Mammary epithelial cell (primary cell): ENCODE measurements at regions of chr17 and their contacts with region 1.

Region 1: GRCh38 chr17:77280980-77281903 is 140.5 kb downstream of the SEC14L1 start:
- DNase-seq: peak; percentile 66
- H3K4me3 ChIP-seq: peak overlapping the region; percentile 84 to 95 (median 87)
- H3K27ac ChIP-seq: peak overlapping the region; percentile 96
- H3K4me1 ChIP-seq: peaks cover 42% of the 10 kb centered on the region
- H3K27me3 ChIP-seq: no peaks in the 10 kb centered on the region
- CTCF ChIP-seq: peak; percentile 19 to 34

Region 2: DNA sequence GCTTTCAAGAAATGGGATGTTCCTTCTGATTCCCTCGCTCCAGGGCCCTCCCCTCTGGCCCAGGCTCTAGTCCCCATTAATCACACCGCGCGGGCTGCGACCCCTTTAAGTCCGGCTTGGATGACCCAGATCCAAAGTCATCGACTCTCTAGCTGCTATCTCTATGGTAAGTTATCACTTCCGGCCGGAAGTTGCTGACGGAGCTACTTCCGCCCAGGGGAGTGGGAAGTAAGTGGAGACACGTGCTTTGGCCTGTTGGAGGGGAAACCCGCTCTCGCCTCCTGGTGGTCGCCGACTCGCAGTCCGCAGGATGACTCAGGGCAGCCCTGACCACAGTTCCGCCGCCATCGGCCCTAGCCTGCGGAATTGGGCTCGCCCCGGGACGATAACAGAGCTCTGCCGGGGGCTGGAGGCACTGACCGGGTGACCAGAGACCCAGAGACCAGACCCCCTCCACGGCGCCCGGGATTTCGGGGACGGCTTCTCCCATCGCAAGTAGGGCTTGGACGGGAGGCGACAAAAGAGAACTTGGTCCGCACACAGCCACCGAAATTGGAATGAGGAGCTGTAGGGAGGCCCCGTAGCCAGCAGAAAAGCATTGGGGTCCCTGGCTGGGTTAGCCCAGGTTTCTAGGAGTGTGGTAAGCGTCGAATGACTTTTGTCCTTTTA is 192.7 kb before region 1 on chr17:
- CTCF ChIA-PET with region 1: no interaction called
- dilution Hi-C with region 1: no loop called
- in situ Hi-C with region 1: no loop called
- intact Hi-C with region 1: loop called (anchors 2 kb)
- DNase-seq: peak; percentile 92
- H3K4me3 ChIP-seq: peak overlapping the region; percentile 62 to 76 (median 68)
- H3K27ac ChIP-seq: peak overlapping the region; percentile 88
- H3K4me1 ChIP-seq: peaks cover 14% of the 10 kb centered on the region
- H3K27me3 ChIP-seq: no peaks in the 10 kb centered on the region
- CTCF ChIP-seq: peak; percentile 48 to 53

Region 3: GRCh38 chr17:77190576-77190975 is 90.7 kb before region 1 on chr17:
- CTCF ChIA-PET with region 1: no interaction called
- dilution Hi-C with region 1: loop called (anchors 5 kb)
- in situ Hi-C with region 1: no loop called
- intact Hi-C with region 1: no loop called
- DNase-seq: no peak
- H3K4me3 ChIP-seq: no peak overlapping the region
- H3K27ac ChIP-seq: no peak overlapping the region
- H3K4me1 ChIP-seq: peaks cover 5% of the 10 kb centered on the region
- H3K27me3 ChIP-seq: no peaks in the 10 kb centered on the region
- CTCF ChIP-seq: no peak

Region 4: GRCh38 chr17:77319211-77320043 is 38.2 kb after region 1 on chr17:
- CTCF ChIA-PET with region 1: no interaction called
- dilution Hi-C with region 1: no loop called
- in situ Hi-C with region 1: loop called in 1 of 2 experiments (anchors 5 kb)
- intact Hi-C with region 1: loop called (anchors 1 kb)
- DNase-seq: peak; percentile 86
- H3K4me3 ChIP-seq: peak overlapping the region; percentile 38 to 48 (median 41)
- H3K27ac ChIP-seq: peak overlapping the region; percentile 84
- H3K4me1 ChIP-seq: peaks cover 88% of the 10 kb centered on the region
- H3K27me3 ChIP-seq: no peaks in the 10 kb centered on the region
- CTCF ChIP-seq: no peak

Region 5: DNA sequence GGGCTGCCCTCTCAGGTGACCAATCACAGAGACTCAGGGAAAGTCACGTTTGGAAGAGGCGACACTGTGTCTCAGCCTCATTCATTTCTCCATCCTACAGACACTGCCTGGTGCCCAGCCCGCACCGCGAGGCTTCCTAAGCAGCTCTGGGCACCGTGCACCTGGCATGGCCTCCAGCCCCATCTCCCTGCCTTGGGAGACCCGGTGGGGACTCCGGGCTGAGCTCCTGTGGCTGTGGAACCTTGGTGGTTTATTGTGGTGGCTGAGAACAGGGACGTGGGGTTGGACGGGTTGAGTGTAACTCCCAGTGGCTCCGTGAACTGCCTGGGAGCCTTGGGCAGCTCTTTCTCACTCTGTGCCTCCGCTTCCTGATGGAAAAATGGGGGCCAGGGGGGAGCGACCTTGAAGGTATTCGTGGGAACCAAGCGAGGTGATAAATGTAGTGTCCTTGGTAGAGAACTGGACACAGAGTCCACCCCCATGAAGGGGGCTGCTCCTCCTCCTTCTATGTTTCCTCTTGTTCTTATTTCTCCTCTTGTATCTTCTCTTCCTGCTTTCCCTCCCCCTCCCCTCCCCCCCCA is 75.0 kb after region 1 on chr17:
- CTCF ChIA-PET with region 1: no interaction called
- dilution Hi-C with region 1: no loop called
- in situ Hi-C with region 1: no loop called
- intact Hi-C with region 1: loop called (anchors 2 kb)
- DNase-seq: peak; percentile 54
- H3K4me3 ChIP-seq: no peak overlapping the region
- H3K27ac ChIP-seq: no peak overlapping the region
- H3K4me1 ChIP-seq: peaks cover 24% of the 10 kb centered on the region
- H3K27me3 ChIP-seq: no peaks in the 10 kb centered on the region
- CTCF ChIP-seq: no peak

Region 6: GRCh38 chr17:77372444-77373298 is 91.4 kb after region 1 on chr17:
- CTCF ChIA-PET with region 1: no interaction called
- dilution Hi-C with region 1: no loop called
- in situ Hi-C with region 1: no loop called
- intact Hi-C with region 1: no loop called
- DNase-seq: peak; percentile 54
- H3K4me3 ChIP-seq: peak overlapping the region in 1 of 3 experiments; percentile 38
- H3K27ac ChIP-seq: no peak overlapping the region
- H3K4me1 ChIP-seq: peaks cover 65% of the 10 kb centered on the region
- H3K27me3 ChIP-seq: no peaks in the 10 kb centered on the region
- CTCF ChIP-seq: no peak

Region 7: GRCh38 chr17:77429919-77430752 is 148.9 kb after region 1 on chr17:
- CTCF ChIA-PET with region 1: no interaction called
- dilution Hi-C with region 1: no loop called
- in situ Hi-C with region 1: no loop called
- intact Hi-C with region 1: loop called (anchors 2 kb)
- DNase-seq: peak; percentile 76
- H3K4me3 ChIP-seq: no peak overlapping the region
- H3K27ac ChIP-seq: peak overlapping the region; percentile 4
- H3K4me1 ChIP-seq: peaks cover 53% of the 10 kb centered on the region
- H3K27me3 ChIP-seq: no peaks in the 10 kb centered on the region
- CTCF ChIP-seq: peak; percentile 66 to 81